OCI-LY7 (cell line): ENCODE measurements at regions of chr14 and their contacts with region 1.

Region 1: DNA sequence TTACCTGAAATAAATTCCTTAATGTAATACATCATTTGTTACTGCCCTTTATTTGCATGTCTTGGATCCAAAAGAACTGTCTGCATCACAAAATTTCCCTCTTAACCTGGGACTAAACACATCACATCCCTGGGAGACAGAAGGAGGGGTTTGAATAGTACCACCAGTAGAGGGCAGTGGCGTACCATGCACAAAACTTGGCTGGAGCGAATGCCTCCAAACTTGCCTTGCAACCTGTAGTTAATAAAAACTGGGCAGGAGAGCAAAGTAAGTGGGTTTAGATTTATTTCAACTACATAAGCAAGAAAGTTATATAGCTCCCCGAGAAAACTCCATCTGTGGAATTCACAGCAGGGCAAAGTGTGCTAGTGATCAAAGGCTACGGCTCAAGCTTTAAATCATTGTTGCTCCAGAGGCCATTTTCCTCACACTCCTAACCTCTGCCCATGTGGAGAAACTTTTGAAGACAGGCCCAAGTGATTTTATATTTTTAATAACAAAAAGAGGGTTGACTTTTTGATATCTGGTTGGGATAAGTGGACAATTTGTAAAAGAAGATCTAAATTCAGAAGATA is 1176.7 kb upstream of the SEL1L start:
- DNase-seq: peak; percentile 54
- H3K4me3 ChIP-seq: no peak overlapping the region
- H3K27ac ChIP-seq: no peak overlapping the region
- H3K4me1 ChIP-seq: no peaks in the 10 kb centered on the region
- CTCF ChIP-seq: peak; percentile 93

Region 2: GRCh38 chr14:83071888-83072501 is 361.6 kb after region 1 on chr14:
- CTCF ChIA-PET with region 1: no interaction called
- POLR2A ChIA-PET with region 1: no interaction called
- intact Hi-C with region 1: loop called (anchors 10 kb)
- DNase-seq: peak; percentile 39
- H3K4me3 ChIP-seq: no peak overlapping the region
- H3K27ac ChIP-seq: no peak overlapping the region
- H3K4me1 ChIP-seq: no peaks in the 10 kb centered on the region
- CTCF ChIP-seq: peak; percentile 71

Region 3: GRCh38 chr14:83463500-83464098 is 753.2 kb after region 1 on chr14:
- CTCF ChIA-PET with region 1: no interaction called
- POLR2A ChIA-PET with region 1: no interaction called
- intact Hi-C with region 1: loop called (anchors 10 kb)
- DNase-seq: peak; percentile 63
- H3K4me3 ChIP-seq: no peak overlapping the region
- H3K27ac ChIP-seq: no peak overlapping the region
- H3K4me1 ChIP-seq: no peaks in the 10 kb centered on the region
- CTCF ChIP-seq: peak; percentile 93